PC-3 (cell line): ENCODE measurements at regions of chr4 and their contacts with region 1.

Region 1: DNA sequence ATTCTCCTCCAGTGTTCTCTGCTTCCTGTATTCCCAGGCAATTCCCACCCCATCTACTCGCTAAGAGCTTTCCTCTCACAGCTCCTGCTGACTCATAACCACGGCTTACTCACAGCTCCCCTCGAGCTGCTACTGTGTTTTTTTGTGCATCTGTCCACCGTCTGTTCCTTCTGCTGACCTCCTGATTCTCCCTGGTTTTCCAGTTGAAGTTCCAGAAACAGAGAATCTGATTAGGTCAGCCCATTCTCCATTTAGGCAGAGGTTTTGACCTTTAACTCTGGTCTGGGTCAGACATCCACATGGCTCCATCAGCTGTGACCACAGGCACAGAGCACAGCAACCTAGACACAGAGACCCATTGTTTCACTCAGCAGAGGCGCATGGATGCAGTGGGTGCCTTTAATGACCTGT is 5.5 kb upstream of the SMIM20 start:
- DNase-seq: peak; percentile 86
- ATAC-seq: peak; percentile 97
- H3K4me3 ChIP-seq: no peak overlapping the region
- H3K27ac ChIP-seq: peak overlapping the region; percentile 50
- H3K4me1 ChIP-seq: peaks cover 8% of the 10 kb centered on the region; the same call in 1 of the 2 replicates
- H3K27me3 ChIP-seq: no peaks in the 10 kb centered on the region
- CTCF ChIP-seq: no peak

Region 2: GRCh38 chr4:25896772-25897539 is 11.5 kb before region 1 on chr4:
- CTCF ChIA-PET with region 1: no interaction called
- POLR2A ChIA-PET with region 1: interaction called, 17 read pairs
- intact Hi-C with region 1: no loop called
- DNase-seq: no peak
- ATAC-seq: peak; percentile 42
- H3K4me3 ChIP-seq: no peak overlapping the region
- H3K27ac ChIP-seq: no peak overlapping the region
- H3K4me1 ChIP-seq: peaks cover 6% of the 10 kb centered on the region; the same call in 1 of the 2 replicates
- H3K27me3 ChIP-seq: no peaks in the 10 kb centered on the region
- CTCF ChIP-seq: no peak